Caco-2 (cell line): ENCODE measurements at regions of chr17 and their contacts with region 1.

Region 1: GRCh38 chr17:44108440-44109324 is 14.8 kb downstream of the HDAC5 start:
- DNase-seq: peak; percentile 74 to 82
- H3K4me3 ChIP-seq: no peak overlapping the region
- H3K4me3 Mint-ChIP-seq: no peak overlapping the region
- H3K27ac Mint-ChIP-seq: peak overlapping the region; percentile 81
- H3K4me1 ChIP-seq: peaks cover 19% of the 10 kb centered on the region
- H3K4me1 Mint-ChIP-seq: peaks cover 7% of the 10 kb centered on the region
- H3K27me3 ChIP-seq: no peaks in the 10 kb centered on the region
- H3K27me3 Mint-ChIP-seq: no peaks in the 10 kb centered on the region
- CTCF ChIP-seq: no peak

Region 2: GRCh38 chr17:44070455-44071197 is 38.1 kb before region 1 on chr17 and contains the start of gene G6PC3:
- CTCF ChIA-PET with region 1: interaction called, 3 read pairs
- POLR2A ChIA-PET with region 1: interaction called, 14 read pairs
- intact Hi-C with region 1: no loop called
- DNase-seq: peak; percentile 98 to 99
- H3K4me3 ChIP-seq: peak within 1 kb of the TSS; percentile 89
- H3K4me3 Mint-ChIP-seq: peak within 1 kb of the TSS; percentile 96
- H3K27ac Mint-ChIP-seq: peak within 1 kb of the TSS; percentile 100
- H3K4me1 ChIP-seq: peaks cover 19% of the 10 kb centered on the region
- H3K4me1 Mint-ChIP-seq: peaks cover 15% of the 10 kb centered on the region
- H3K27me3 ChIP-seq: no peaks in the 10 kb centered on the region
- H3K27me3 Mint-ChIP-seq: no peaks in the 10 kb centered on the region
- CTCF ChIP-seq: no peak
- total RNA-seq, gene G6PC3: 60.1 and 64.5 TPM in 2 replicates

Region 3: GRCh38 chr17:44167181-44167861 is 58.6 kb after region 1 on chr17:
- CTCF ChIA-PET with region 1: no interaction called
- POLR2A ChIA-PET with region 1: no interaction called
- intact Hi-C with region 1: no loop called
- DNase-seq: no peak
- H3K4me3 ChIP-seq: no peak overlapping the region
- H3K4me3 Mint-ChIP-seq: no peak overlapping the region
- H3K27ac Mint-ChIP-seq: no peak overlapping the region
- H3K4me1 ChIP-seq: peaks cover 18% of the 10 kb centered on the region
- H3K4me1 Mint-ChIP-seq: peaks cover 12% of the 10 kb centered on the region
- H3K27me3 ChIP-seq: no peaks in the 10 kb centered on the region
- H3K27me3 Mint-ChIP-seq: no peaks in the 10 kb centered on the region
- CTCF ChIP-seq: no peak